Activated CD4-positive, alpha-beta T cell treated with anti-CD3 and anti-CD28 coated beads, Interleukin-2, amount 10 ng/mL, durations not matched to agents 24 days and 14 days (primary cell): ENCODE measurements at regions of chr9 and their contacts with region 1.

Region 1: GRCh38 chr9:5518171-5518936 is 8.0 kb downstream of the PDCD1LG2 start:
- DNase-seq: no peak
- H3K4me3 Mint-ChIP-seq: no peak overlapping the region
- H3K27ac Mint-ChIP-seq: peak overlapping the region; percentile 23
- H3K4me1 Mint-ChIP-seq: peaks cover 28% of the 10 kb centered on the region
- H3K27me3 Mint-ChIP-seq: peaks cover 2% of the 10 kb centered on the region

Region 2: GRCh38 chr9:5562806-5563416 is 44.6 kb after region 1 on chr9:
- intact Hi-C with region 1: loop called (anchors 2 kb)
- DNase-seq: no peak
- H3K4me3 Mint-ChIP-seq: no peak overlapping the region
- H3K27ac Mint-ChIP-seq: peak overlapping the region; percentile 5
- H3K4me1 Mint-ChIP-seq: peaks cover 35% of the 10 kb centered on the region
- H3K27me3 Mint-ChIP-seq: no peaks in the 10 kb centered on the region

Region 3: GRCh38 chr9:5665059-5665458 is 146.7 kb after region 1 on chr9:
- intact Hi-C with region 1: no loop called
- DNase-seq: no peak
- H3K4me3 Mint-ChIP-seq: no peak overlapping the region
- H3K27ac Mint-ChIP-seq: peak overlapping the region; percentile 3
- H3K4me1 Mint-ChIP-seq: peaks cover 23% of the 10 kb centered on the region
- H3K27me3 Mint-ChIP-seq: no peaks in the 10 kb centered on the region

Region 4: DNA sequence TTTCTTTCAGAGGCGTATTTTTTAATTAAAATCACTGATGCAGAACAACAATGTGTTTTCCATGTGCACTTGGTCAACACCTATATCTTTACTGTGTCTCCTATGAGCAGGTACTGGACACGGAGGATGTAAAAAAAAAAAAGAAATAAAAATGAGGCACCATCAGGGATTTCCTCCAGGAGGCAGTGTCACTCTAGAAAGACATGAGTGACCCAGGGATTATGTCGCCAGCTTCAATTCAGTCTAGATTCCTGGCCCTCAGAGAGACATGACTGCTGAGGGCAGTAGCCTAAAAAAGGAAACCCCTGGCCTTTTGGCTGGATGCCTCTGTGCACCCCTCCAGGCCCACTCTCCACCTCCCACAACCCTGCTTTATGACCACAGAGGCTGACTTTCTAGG is 679.0 kb after region 1 on chr9:
- intact Hi-C with region 1: no loop called
- DNase-seq: no peak
- H3K4me3 Mint-ChIP-seq: no peak overlapping the region
- H3K27ac Mint-ChIP-seq: no peak overlapping the region
- H3K4me1 Mint-ChIP-seq: no peaks in the 10 kb centered on the region
- H3K27me3 Mint-ChIP-seq: peaks cover 8% of the 10 kb centered on the region